IMR-90 (cell line): ENCODE measurements at regions of chr12 and their contacts with region 1.

Region 1: DNA sequence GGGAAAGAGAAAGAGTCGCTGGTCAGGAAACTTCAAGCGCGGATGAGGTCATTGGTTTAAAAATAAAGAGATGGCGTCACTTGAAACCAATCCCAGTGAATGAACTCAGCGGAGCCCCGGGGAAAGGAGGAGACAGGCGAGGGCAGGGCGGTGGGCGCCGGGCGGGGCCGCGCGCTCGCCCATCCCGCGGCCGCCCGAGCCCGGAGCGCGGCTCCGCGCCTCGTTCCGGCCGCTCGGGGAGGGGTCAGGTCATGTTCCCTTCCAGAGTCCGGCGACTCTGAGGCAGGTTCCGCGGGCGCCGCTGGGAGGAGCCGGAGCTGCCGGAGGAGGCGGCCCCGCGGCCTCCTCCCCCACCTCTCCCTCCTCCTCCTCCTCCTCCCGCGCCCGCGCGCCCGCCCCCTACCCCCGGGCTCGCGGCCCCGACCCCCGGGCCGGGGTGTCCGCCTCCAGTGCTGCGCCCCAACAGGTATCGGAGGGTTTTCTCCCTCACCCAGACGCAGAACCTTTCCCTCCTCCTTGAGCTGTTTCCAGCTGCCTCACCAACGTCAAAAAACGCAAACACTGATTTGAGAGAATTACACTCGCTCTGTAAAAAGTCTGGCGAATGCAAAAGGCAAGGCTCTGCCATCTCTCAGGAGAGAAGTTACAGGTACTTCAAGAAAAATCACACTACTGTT is at the start of gene DUSP16:
- DNase-seq: peak; percentile 95
- ATAC-seq: peak; percentile 96
- H3K4me3 ChIP-seq: peak within 1 kb of the TSS; percentile 99
- H3K27ac ChIP-seq: peak within 1 kb of the TSS; percentile 100
- H3K4me1 ChIP-seq: peaks cover 2% of the 10 kb centered on the region; the same call in 1 of the 2 replicates
- H3K27me3 ChIP-seq: peaks cover 2% of the 10 kb centered on the region; the same call in 1 of the 2 replicates
- CTCF ChIP-seq: peak; percentile 14; the same call in 1 of the 2 replicates
- POLR2A ChIP-seq: peak; percentile 37
- RAD21 ChIP-seq: no peak
- total RNA-seq, gene DUSP16: 10.0 and 10.6 TPM in 2 replicates

Region 2: DNA sequence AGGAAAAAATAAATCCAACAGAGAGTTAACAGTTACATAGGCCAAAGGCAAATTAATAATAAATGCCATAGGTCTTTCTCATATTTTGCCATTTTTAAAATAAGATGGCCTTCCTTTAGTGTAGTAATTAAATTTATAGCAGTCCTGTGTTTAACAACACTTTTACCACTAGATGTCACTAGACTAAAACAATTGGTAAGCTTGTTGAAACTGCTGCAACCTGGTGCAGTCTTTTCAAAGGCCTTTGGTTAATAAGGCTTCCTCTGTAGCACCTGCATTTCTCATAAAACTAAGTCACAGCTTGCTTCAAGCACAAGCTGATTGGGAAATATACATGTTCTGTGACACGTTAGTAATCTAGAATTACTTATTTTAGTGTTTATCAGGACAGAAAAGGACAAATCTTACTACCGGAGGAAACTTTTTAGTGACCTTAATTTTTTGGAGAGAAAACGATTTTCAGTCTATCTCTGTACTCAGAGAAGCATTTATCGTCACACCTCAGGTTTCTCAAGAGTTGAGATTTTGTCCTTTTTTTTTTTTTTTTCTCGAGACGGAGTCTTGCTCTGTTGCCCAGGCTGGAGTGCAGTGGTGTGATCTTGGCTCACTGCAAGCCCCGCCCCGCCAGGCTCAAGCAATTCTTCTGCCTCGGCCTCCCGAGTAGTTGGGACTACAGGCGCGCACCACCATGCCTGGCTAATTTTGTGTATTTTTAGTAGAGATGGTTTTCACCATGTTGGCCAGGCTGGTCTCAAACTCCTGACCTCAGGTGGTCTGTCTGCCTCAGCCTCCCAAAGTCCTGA is 185.9 kb before region 1 on chr12:
- CTCF ChIA-PET with region 1: interaction called, 4 read pairs
- POLR2A ChIA-PET with region 1: no interaction called
- dilution Hi-C with region 1: no loop called
- in situ Hi-C with region 1: no loop called
- intact Hi-C with region 1: loop called (anchors 1 kb)
- DNase-seq: peak; percentile 86
- ATAC-seq: peak; percentile 95
- H3K4me3 ChIP-seq: no peak overlapping the region
- H3K27ac ChIP-seq: no peak overlapping the region
- H3K4me1 ChIP-seq: peaks cover 2% of the 10 kb centered on the region; the same call in 1 of the 2 replicates
- H3K27me3 ChIP-seq: no peaks in the 10 kb centered on the region
- CTCF ChIP-seq: peak; percentile 89
- POLR2A ChIP-seq: 0 out of 2 replicates have a peak, but pooled peaks have one; percentile 38
- RAD21 ChIP-seq: peak; percentile 97

Region 3: DNA sequence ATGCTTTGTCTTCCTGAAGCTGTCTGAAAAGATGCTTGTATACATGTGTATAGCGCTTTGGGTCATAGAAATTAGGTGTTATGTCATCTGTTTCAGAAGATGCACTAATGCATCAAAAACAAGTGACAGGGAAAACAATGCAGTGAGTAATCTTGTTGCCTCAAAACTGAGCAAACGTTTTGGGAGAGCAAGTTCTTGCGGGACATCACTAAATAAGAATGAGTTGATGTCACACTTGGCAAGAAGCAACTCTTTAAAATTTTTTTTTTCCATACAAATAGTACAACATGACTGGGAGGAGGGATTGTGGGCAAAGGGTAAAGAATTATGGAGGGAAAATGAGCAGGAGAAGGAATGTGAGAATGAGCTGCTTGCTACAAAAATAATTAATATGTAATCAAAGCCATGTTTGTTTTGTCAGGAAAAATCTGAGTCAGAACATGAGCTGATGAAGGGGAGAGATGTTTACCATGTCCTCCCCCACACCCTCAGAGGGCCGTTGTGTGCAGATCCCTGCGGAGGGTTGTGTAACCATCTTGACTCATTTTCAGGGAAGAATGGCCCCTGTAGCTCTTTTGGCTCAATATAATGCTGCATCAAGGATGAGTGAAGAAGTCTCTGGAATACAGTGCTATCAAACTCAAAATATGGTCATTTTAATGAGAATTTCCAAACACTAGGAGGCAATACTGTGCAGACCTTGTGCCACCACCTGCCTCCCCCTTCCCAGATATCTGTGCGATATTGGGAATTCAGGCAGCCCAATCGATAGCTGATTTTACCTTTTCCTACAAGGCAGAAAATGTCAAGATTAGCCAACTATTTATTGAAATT is 164.5 kb before region 1 on chr12:
- CTCF ChIA-PET with region 1: no interaction called
- POLR2A ChIA-PET with region 1: no interaction called
- dilution Hi-C with region 1: no loop called
- in situ Hi-C with region 1: loop called (anchors 10 kb)
- intact Hi-C with region 1: loop called (anchors 1 kb)
- DNase-seq: peak; percentile 97
- ATAC-seq: peak; percentile 98
- H3K4me3 ChIP-seq: no peak overlapping the region
- H3K27ac ChIP-seq: peak overlapping the region; percentile 68; the same call in 1 of the 2 replicates
- H3K4me1 ChIP-seq: peaks cover 8% of the 10 kb centered on the region
- H3K27me3 ChIP-seq: no peaks in the 10 kb centered on the region
- CTCF ChIP-seq: 0 out of 2 replicates have a peak, but pooled peaks have one; percentile 14
- POLR2A ChIP-seq: no peak
- RAD21 ChIP-seq: peak; percentile 28

Region 4: GRCh38 chr12:12505544-12506495 is 56.9 kb before region 1 on chr12:
- CTCF ChIA-PET with region 1: no interaction called
- POLR2A ChIA-PET with region 1: no interaction called
- dilution Hi-C with region 1: no loop called
- in situ Hi-C with region 1: no loop called
- intact Hi-C with region 1: loop called (anchors 5 kb)
- DNase-seq: peak; percentile 65
- ATAC-seq: peak; percentile 48
- H3K4me3 ChIP-seq: peak overlapping the region; percentile 30; the same call in 1 of the 2 replicates
- H3K27ac ChIP-seq: peak overlapping the region; percentile 56; the same call in 1 of the 2 replicates
- H3K4me1 ChIP-seq: peaks cover 16% of the 10 kb centered on the region
- H3K27me3 ChIP-seq: no peaks in the 10 kb centered on the region
- CTCF ChIP-seq: no peak
- POLR2A ChIP-seq: no peak
- RAD21 ChIP-seq: no peak

Region 5: DNA sequence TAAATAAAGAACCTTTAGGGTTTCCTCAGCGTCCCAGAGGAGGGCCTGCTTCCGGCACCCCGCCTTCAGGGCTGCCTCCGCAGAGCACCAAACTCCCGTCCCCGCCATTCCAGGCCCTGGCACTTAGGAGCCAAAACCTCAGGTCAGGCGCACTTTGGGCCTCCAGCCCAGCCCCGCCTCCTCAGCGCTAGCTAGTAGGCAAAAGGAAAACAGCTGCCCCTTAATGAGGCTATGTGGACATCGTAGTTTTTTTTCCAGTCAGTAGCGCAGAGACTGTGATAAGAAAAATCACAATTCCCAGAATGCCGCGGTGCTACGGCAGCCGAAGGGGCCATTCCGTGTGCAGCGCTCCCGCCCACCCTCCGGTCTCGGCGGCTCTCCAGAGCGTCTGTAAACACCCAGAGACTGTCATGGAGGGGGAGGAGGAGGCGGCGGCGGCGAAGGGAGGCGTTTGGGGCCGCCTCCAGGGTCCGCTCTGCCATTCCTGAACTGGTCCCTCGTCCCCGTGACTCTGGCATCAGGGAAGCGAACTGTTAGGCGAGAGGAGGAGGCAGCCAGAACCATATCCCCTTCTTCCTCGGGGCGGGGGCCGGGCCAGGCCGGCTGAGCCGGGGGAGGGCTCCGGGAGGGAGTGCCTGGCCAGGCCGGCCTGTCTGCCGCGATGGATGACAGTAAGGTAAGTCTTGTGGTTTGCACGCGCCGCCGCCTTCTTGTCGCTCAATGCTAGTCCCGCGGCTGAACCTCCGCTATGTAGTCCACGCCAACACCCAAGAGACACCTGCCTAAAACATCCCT is 49.0 kb after region 1 on chr12 and contains the start of gene CREBL2:
- CTCF ChIA-PET with region 1: no interaction called
- POLR2A ChIA-PET with region 1: no interaction called
- dilution Hi-C with region 1: no loop called
- in situ Hi-C with region 1: no loop called
- intact Hi-C with region 1: loop called (anchors 5 kb)
- DNase-seq: peak; percentile 95
- ATAC-seq: peak; percentile 93
- H3K4me3 ChIP-seq: peak within 1 kb of the TSS; percentile 67
- H3K27ac ChIP-seq: peak within 1 kb of the TSS; percentile 79
- H3K4me1 ChIP-seq: peaks cover 3% of the 10 kb centered on the region; the same call in 1 of the 2 replicates
- H3K27me3 ChIP-seq: no peaks in the 10 kb centered on the region
- CTCF ChIP-seq: no peak
- POLR2A ChIP-seq: peak; percentile 36; the same call in 1 of the 2 replicates
- RAD21 ChIP-seq: no peak
- total RNA-seq, gene CREBL2: 19.0 and 32.5 TPM in 2 replicates

Region 6: GRCh38 chr12:12654691-12655460 is 92.2 kb after region 1 on chr12:
- CTCF ChIA-PET with region 1: interaction called, 4 read pairs
- POLR2A ChIA-PET with region 1: no interaction called
- dilution Hi-C with region 1: no loop called
- in situ Hi-C with region 1: no loop called
- intact Hi-C with region 1: loop called (anchors 5 kb)
- DNase-seq: no peak
- ATAC-seq: no peak
- H3K4me3 ChIP-seq: no peak overlapping the region
- H3K27ac ChIP-seq: no peak overlapping the region
- H3K4me1 ChIP-seq: 0 out of 2 replicates have a peak, but pooled peaks cover 3% of the 10 kb centered on the region
- H3K27me3 ChIP-seq: no peaks in the 10 kb centered on the region
- CTCF ChIP-seq: no peak
- POLR2A ChIP-seq: no peak
- RAD21 ChIP-seq: no peak